Activated CD4-positive, alpha-beta T cell treated with anti-CD3 and anti-CD28 coated beads for 36 hours (primary cell): ENCODE measurements at regions of chr2 and their contacts with region 1.

Region 1: GRCh38 chr2:49490710-49491109 is 336.4 kb upstream of the FSHR start:
- DNase-seq: peak; percentile 41
- ATAC-seq: no peak
- H3K4me3 Mint-ChIP-seq: no peak overlapping the region
- H3K27ac Mint-ChIP-seq: no peak overlapping the region
- H3K4me1 Mint-ChIP-seq: no peaks in the 10 kb centered on the region
- H3K27me3 Mint-ChIP-seq: no peaks in the 10 kb centered on the region

Region 2: GRCh38 chr2:48946449-48947048 is 544.2 kb before region 1 on chr2:
- CTCF ChIA-PET with region 1: no interaction called
- POLR2A ChIA-PET with region 1: no interaction called
- intact Hi-C with region 1: loop called in 1 of 2 experiments (anchors 2 kb)
- DNase-seq: peak; percentile 50
- ATAC-seq: peak; percentile 78
- H3K4me3 Mint-ChIP-seq: no peak overlapping the region
- H3K27ac Mint-ChIP-seq: no peak overlapping the region
- H3K4me1 Mint-ChIP-seq: no peaks in the 10 kb centered on the region
- H3K27me3 Mint-ChIP-seq: peaks cover 1% of the 10 kb centered on the region

Region 3: GRCh38 chr2:50358586-50358985 is 867.9 kb after region 1 on chr2:
- CTCF ChIA-PET with region 1: no interaction called
- POLR2A ChIA-PET with region 1: no interaction called
- intact Hi-C with region 1: no loop called
- DNase-seq: no peak
- ATAC-seq: no peak
- H3K4me3 Mint-ChIP-seq: no peak overlapping the region
- H3K27ac Mint-ChIP-seq: no peak overlapping the region
- H3K4me1 Mint-ChIP-seq: no peaks in the 10 kb centered on the region
- H3K27me3 Mint-ChIP-seq: peaks cover 1% of the 10 kb centered on the region